ENCODE measurements at regions of chr13 and their contacts with region 1.

Region 1: DNA sequence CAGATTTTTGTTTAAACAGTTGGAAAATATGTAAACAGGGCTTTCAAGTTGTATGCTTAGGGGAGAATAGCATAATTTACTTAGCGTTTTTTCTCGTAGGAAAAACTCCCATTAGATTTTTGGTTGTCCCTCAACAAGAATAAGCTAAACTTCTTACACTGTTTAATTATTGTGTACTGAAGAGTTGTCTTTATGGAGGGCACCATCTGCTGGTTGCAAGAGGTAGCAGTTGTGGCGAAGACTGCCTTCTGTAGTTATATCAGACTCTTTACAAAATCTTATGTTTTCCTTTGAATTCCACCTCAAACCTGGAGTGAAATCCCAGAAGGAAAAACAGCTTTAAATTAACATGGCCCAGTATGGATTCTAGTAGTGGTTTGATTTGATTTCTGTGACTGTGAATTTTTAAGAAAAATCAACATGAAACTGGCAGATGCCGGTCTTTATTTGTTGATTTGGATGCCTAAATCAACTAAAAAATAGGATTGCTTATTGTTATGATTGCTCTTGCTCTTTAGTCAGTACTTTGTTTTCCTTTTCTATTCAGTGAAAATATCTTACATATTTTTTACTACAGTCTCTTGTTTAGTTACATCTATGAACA is 53.4 kb downstream of the PDS5B start:
- DNase-seq: peak; percentile 28 to 65
- ATAC-seq: peak; percentile 83 to 97 (median 86)
- H3K4me3 ChIP-seq: no peak overlapping the region
- H3K27ac ChIP-seq: no peak overlapping the region
- H3K4me1 ChIP-seq: peaks cover 9% of the 10 kb centered on the region
- H3K27me3 ChIP-seq: no peaks in the 10 kb centered on the region
- CTCF ChIP-seq: peak; percentile 92

Region 2: DNA sequence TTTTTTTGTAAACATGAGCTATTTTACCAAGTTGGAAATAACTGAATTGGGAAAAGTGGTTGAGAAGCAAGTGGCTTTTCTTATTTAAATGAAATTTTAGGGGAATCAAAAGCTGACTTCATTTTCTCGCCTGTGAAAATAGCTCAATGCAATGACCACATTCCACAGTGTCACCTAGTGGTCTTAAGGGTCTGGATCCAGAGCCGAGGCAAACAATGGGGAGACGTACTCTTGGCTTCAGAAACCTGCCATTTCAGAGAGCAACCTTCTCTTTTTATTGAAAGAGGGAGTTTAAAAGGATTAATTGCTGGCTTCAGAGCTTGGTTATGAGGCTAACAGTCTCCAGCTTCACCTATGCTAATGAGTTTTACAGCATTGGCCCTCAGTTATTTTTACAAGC is 940.0 kb before region 1 on chr13:
- intact Hi-C with region 1: no loop called
- DNase-seq: no peak
- ATAC-seq: no peak
- H3K4me3 ChIP-seq: no peak overlapping the region
- H3K27ac ChIP-seq: no peak overlapping the region
- H3K4me1 ChIP-seq: no peaks in the 10 kb centered on the region
- H3K27me3 ChIP-seq: no peaks in the 10 kb centered on the region
- CTCF ChIP-seq: no peak

Region 3: DNA sequence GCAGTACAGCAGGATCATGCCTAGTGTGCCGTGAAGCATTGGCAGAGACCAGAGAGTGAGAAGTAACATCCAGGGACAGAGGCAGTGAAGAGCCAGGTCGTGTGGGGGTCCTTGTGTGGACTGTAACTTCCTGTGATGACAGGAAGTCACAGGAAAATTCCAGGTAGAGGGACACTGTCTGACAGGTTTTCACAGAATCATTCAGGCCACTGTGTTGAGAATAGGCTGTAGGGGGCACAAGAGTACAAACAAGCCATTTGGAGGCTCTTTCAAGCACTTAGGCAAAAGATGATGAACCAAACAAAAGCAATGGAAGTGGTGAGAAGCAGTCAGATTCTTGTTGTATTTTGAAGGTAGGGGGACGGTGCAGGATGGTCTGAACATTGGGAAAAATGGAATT is 258.1 kb before region 1 on chr13:
- intact Hi-C with region 1: loop called in 1 of 2 experiments (anchors 10 kb)
- DNase-seq: no peak
- ATAC-seq: peak in 2 of 4 donors; percentile 45 to 71
- H3K4me3 ChIP-seq: no peak overlapping the region
- H3K27ac ChIP-seq: no peak overlapping the region
- H3K4me1 ChIP-seq: no peaks in the 10 kb centered on the region
- H3K27me3 ChIP-seq: no peaks in the 10 kb centered on the region
- CTCF ChIP-seq: peak; percentile 56

Region 4: GRCh38 chr13:32390048-32390447 is 249.6 kb before region 1 on chr13:
- intact Hi-C with region 1: loop called (anchors 10 kb)
- DNase-seq: no peak
- ATAC-seq: no peak
- H3K4me3 ChIP-seq: no peak overlapping the region
- H3K27ac ChIP-seq: no peak overlapping the region
- H3K4me1 ChIP-seq: no peaks in the 10 kb centered on the region
- H3K27me3 ChIP-seq: no peaks in the 10 kb centered on the region
- CTCF ChIP-seq: no peak

Region 5: GRCh38 chr13:32472194-32472621 is 167.4 kb before region 1 on chr13:
- intact Hi-C with region 1: loop called in 1 of 2 experiments (anchors 10 kb)
- DNase-seq: no peak
- ATAC-seq: no peak
- H3K4me3 ChIP-seq: no peak overlapping the region
- H3K27ac ChIP-seq: peak overlapping the region; percentile 54
- H3K4me1 ChIP-seq: peaks cover 48% of the 10 kb centered on the region
- H3K27me3 ChIP-seq: no peaks in the 10 kb centered on the region
- CTCF ChIP-seq: no peak

Region 6: GRCh38 chr13:32586080-32586900 is 53.3 kb before region 1 on chr13 and contains the start of gene PDS5B:
- intact Hi-C with region 1: loop called (anchors 2 kb)
- DNase-seq: peak; percentile 95 to 98
- ATAC-seq: peak; percentile 93 to 99 (median 98)
- H3K4me3 ChIP-seq: peak within 1 kb of the TSS; percentile 89
- H3K27ac ChIP-seq: peak within 1 kb of the TSS; percentile 94
- H3K4me1 ChIP-seq: peaks cover 31% of the 10 kb centered on the region
- H3K27me3 ChIP-seq: no peaks in the 10 kb centered on the region
- CTCF ChIP-seq: peak; percentile 96
- total RNA-seq, gene PDS5B: 18.3 to 28.1 (median 22.1) TPM